ENCODE measurements at regions of chr4 and their contacts with region 1.

Region 1: GRCh38 chr4:140603278-140603677 is 34.5 kb upstream of the UCP1 start:
- DNase-seq: no peak
- H3K4me3 ChIP-seq: no peak overlapping the region
- H3K27ac ChIP-seq: no peak overlapping the region
- H3K4me1 ChIP-seq: no peaks in the 10 kb centered on the region
- H3K27me3 ChIP-seq: no peaks in the 10 kb centered on the region
- CTCF ChIP-seq: no peak
- EP300 ChIP-seq: no peak
- POLR2A ChIP-seq: no peak

Region 2: DNA sequence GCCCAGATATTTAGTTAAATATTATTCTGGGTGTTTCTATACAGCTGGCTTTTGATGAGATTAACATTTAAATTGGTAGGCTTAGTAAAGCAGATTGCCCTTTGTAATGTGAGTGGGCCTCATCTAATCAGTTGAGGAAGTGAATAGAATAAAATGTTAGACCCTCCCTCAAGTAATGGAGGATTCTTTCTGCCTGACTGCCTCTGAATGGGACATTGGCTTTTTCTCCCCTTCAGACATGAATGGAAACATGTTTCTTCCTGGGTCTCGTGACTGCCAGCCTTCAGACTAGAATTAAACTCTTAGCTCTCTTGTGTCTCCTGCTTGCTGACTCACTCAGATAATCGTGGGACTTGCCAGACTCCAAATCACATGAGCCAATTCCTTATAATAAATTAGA is 1976.2 kb after region 1 on chr4:
- in situ Hi-C with region 1: no loop called
- intact Hi-C with region 1: loop called (anchors 5 kb)
- DNase-seq: no peak
- H3K4me3 ChIP-seq: no peak overlapping the region
- H3K27ac ChIP-seq: no peak overlapping the region
- H3K4me1 ChIP-seq: no peaks in the 10 kb centered on the region
- H3K27me3 ChIP-seq: no peaks in the 10 kb centered on the region
- CTCF ChIP-seq: no peak
- EP300 ChIP-seq: no peak
- POLR2A ChIP-seq: no peak